Heart left ventricle (tissue), 16 donors: ENCODE measurements at regions of chr17 and their contacts with region 1.

Region 1: DNA sequence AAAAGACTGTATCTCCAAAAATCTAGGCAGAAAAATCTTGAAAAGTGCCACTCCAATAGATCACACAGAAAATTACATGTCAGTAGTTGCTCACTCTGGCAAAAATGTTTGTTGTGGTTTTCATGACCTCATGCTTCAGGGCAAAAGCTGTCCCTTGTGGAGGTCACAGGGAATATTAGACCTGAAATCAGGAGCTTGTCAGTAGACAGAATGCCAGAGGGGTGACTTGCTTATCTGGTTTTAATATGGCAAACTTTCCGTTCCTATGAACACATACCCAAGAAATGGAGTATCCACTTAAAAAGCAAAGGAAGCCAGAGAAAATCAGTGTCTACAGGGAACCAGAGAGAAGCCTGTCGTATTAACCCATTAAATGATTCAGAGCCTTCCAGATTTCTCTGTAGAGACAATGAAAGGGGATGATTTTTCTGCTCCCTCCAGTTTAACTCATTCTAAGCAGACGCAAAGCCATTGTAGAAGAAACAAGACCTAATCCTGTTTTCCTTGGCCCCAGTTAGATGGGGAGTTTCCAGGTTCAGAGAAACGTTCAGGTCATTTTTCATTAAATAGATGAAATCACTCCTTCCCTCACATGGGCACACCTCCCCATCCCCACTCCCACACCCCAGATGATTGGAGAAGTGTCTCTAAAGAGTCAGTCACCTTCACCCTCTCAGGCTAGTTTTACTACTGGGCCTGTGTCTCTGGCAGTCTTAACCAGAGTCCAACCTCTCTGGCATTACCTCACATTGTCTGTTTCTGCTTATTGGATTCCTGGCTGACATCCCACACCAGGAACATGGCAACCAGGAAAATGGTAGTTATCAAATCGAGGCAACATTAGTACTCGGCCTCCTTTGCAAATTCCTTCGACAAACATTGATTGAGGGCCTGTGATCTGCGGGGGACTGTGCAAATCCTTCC is 6.0 kb downstream of the SOX9 start:
- DNase-seq: peak in 1 of 5 donors; percentile 17
- ATAC-seq: peak; percentile 60 to 73 (median 66)
- H3K4me3 ChIP-seq: no peak overlapping the region
- H3K27ac ChIP-seq: peak overlapping the region; percentile 28 to 98 (median 72)
- H3K4me1 ChIP-seq: peaks cover 0 to 45% (median 8%) of the 10 kb centered on the region in 12 donors
- H3K27me3 ChIP-seq: peaks cover 0 to 33% (median 9%) of the 10 kb centered on the region in 9 donors
- CTCF ChIP-seq: no peak
- POLR2A ChIP-seq: no peak

Region 2: DNA sequence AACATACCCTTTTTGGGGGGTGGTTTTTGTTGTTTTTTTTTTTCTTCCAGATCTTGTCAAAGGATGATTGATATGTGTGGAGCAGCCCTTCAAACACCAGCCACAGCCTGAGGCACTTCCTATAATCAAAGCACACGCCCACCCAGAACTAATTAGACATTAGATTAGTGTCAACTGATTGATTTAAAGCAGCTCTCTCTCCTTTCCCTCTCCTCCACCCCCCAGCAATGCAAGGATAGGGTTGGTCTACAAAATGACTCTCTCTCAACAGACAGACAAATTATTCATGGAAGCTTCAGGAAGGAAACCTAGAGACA is 256.3 kb before region 1 on chr17:
- intact Hi-C with region 1: no loop called
- DNase-seq: no peak
- ATAC-seq: no peak
- H3K4me3 ChIP-seq: no peak overlapping the region
- H3K27ac ChIP-seq: no peak overlapping the region
- H3K4me1 ChIP-seq: no peaks in the 10 kb centered on the region
- H3K27me3 ChIP-seq: no peaks in the 10 kb centered on the region
- CTCF ChIP-seq: no peak
- POLR2A ChIP-seq: no peak

Region 3: GRCh38 chr17:72151565-72152391 is 25.0 kb after region 1 on chr17:
- intact Hi-C with region 1: loop called in 2 of 10 experiments (anchors 2 kb)
- DNase-seq: peak in 4 of 5 donors; percentile 58 to 88 (median 76)
- ATAC-seq: peak; percentile 90 to 94 (median 92)
- H3K4me3 ChIP-seq: peak overlapping the region in 5 of 12 donors; percentile 2 to 28 (median 6)
- H3K27ac ChIP-seq: peak overlapping the region; percentile 61 to 94 (median 78)
- H3K4me1 ChIP-seq: peaks cover 0 to 25% (median 12%) of the 10 kb centered on the region in 12 donors
- H3K27me3 ChIP-seq: no peaks in the 10 kb centered on the region
- CTCF ChIP-seq: no peak
- POLR2A ChIP-seq: no peak

Region 4: DNA sequence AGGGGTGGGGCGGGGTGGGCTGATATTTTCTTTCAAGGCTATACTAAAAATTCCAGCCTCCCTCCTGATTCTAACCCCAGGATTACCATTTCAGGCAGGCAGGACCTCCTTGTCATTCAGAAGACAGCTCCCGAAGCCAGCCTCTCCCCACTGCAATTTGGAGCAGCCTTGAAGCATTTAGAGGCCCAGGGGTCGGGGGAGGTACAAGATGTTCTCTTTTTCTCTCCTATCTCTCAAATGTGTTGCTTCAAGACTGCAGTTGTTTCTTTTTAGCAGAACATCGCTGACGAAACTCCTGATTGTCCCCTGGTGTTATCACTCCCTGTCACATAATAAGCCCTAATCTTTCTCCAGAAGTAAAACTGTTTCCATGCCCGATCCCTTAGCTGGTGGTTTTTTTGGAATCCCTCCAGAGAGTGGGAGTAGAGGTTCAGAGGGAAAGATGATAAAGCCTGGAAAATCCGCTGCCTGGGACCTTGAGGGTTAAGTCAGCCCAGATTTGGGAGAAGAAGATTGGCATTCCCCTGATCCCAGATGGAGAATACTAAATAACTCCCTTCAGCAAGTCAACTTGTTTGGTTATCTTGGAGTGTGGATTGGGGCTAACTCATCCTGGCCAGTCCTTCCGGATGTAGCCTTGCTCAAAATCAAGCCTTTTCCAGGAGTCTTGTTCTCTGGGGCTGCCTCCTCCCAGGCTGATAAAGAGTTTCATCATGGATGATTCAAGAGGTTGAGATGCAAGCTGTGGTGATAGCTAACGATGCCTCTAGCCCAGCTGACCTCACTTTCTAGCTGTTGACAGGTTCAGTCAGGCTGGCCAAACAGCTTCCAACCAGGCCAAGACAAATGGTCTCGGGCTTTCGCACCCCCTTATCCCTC is 65.3 kb after region 1 on chr17:
- intact Hi-C with region 1: loop called in 4 of 10 experiments (anchors 2 to 5 kb)
- DNase-seq: peak in 4 of 5 donors; percentile 45 to 81 (median 62)
- ATAC-seq: peak; percentile 79 to 88 (median 86)
- H3K4me3 ChIP-seq: peak overlapping the region in 1 of 12 donors; percentile 13
- H3K27ac ChIP-seq: peak overlapping the region in 9 of 12 donors; percentile 40 to 76 (median 56)
- H3K4me1 ChIP-seq: peaks cover 0 to 21% (median 0%) of the 10 kb centered on the region in 12 donors
- H3K27me3 ChIP-seq: no peaks in the 10 kb centered on the region
- CTCF ChIP-seq: no peak
- POLR2A ChIP-seq: no peak

Region 5: GRCh38 chr17:72212041-72212440 is 85.2 kb after region 1 on chr17:
- intact Hi-C with region 1: no loop called
- DNase-seq: no peak
- ATAC-seq: no peak
- H3K4me3 ChIP-seq: no peak overlapping the region
- H3K27ac ChIP-seq: no peak overlapping the region
- H3K4me1 ChIP-seq: no peaks in the 10 kb centered on the region
- H3K27me3 ChIP-seq: peaks cover 0 to 4% (median 0%) of the 10 kb centered on the region in 9 donors
- CTCF ChIP-seq: no peak
- POLR2A ChIP-seq: no peak